Sigmoid colon (tissue), 7 donors: ENCODE measurements at regions of chr10 and their contacts with region 1.

Region 1: GRCh38 chr10:42552493-42553407 is 85.6 kb downstream of the ZNF33B start:
- DNase-seq: peak; percentile 97
- H3K4me3 ChIP-seq: peak overlapping the region; percentile 60 to 87 (median 77)
- H3K27ac ChIP-seq: peak overlapping the region; percentile 77 to 83 (median 80)
- H3K4me1 ChIP-seq: peaks cover 0 to 23% (median 21%) of the 10 kb centered on the region in 4 donors
- H3K27me3 ChIP-seq: no peaks in the 10 kb centered on the region
- CTCF ChIP-seq: no peak
- EP300 ChIP-seq: no peak
- POLR2A ChIP-seq: no peak

Region 2: DNA sequence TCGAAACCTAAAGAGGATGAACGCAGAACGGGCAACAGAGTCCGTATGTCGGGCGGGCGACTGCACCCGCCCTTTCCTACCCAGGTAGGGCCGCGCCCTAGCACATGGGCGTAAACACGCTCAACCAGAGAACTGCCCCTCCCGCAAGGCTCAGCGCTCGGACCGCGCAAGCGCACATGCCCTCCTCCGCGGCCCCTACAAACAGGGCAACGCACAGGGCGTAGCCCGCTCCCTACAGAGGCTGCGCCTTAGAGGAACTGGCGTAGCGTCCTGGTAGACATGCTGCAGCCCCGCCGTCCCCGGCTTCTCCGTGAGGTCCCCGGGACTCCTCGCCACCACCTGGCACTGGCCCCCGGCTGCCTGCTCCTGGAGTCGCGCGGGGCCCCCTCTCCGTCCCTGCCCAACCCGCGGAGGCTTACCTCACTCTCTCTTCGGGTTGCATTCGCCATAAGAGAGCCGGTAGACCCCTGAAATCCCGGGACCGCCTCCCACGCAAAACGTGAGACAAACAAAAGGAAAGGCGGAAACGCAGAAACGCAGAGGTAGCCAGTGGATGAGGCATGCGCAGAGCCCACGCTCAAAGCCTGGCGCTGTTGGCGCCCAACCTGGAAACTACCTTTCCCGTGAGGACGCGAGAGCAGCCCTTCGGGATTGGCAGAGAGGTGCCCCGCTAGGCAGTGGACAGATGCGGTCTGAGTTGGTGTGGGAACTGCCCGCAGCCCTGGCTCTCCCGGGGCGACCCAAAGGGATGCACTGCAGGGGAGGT is 85.5 kb after region 1 on chr10 and contains the start of gene ZNF33B:
- intact Hi-C with region 1: loop called (anchors 2 kb)
- DNase-seq: peak; percentile 95
- H3K4me3 ChIP-seq: peak within 1 kb of the TSS; percentile 62 to 82 (median 76)
- H3K27ac ChIP-seq: peak within 1 kb of the TSS; percentile 89 to 92 (median 90)
- H3K4me1 ChIP-seq: peaks cover 0 to 10% (median 3%) of the 10 kb centered on the region in 4 donors
- H3K27me3 ChIP-seq: no peaks in the 10 kb centered on the region
- CTCF ChIP-seq: no peak
- EP300 ChIP-seq: no peak
- POLR2A ChIP-seq: peak; percentile 36 to 54
- total RNA-seq, gene ZNF33B: 14.8 to 21.9 (median 17.4) TPM

Region 3: GRCh38 chr10:42782446-42783180 is 229.9 kb after region 1 on chr10 and contains the start of gene BMS1:
- intact Hi-C with region 1: loop called (anchors 10 kb)
- DNase-seq: peak; percentile 94
- H3K4me3 ChIP-seq: peak within 1 kb of the TSS; percentile 55 to 74 (median 64)
- H3K27ac ChIP-seq: peak within 1 kb of the TSS; percentile 88 to 96 (median 90)
- H3K4me1 ChIP-seq: peaks cover 0 to 18% (median 13%) of the 10 kb centered on the region in 4 donors
- H3K27me3 ChIP-seq: peaks cover 0 to under 1% (median 0%) of the 10 kb centered on the region in 3 donors
- CTCF ChIP-seq: no peak
- EP300 ChIP-seq: no peak
- POLR2A ChIP-seq: peak; percentile 45 to 61
- total RNA-seq, gene BMS1: 12.2 to 14.3 (median 13.3) TPM

Region 4: DNA sequence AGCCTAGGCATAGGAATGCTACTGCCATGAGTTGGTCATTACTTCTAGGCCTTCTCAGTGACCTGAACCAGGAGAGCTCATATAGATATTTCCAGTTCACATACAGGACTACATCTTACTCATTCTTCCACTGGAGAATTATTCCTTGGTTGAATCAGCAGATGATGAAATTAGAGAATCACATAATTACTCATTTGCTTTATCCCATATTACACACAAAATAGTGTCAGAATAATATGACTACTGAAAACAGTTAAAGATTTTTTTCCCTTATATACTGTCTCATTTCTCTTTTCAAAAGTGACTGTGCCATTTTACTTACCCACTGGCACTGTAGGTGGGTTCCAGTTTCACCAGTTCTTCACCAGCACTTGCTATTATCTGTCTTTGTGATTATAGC is 248.4 kb after region 1 on chr10:
- intact Hi-C with region 1: no loop called
- DNase-seq: no peak
- H3K4me3 ChIP-seq: no peak overlapping the region
- H3K27ac ChIP-seq: no peak overlapping the region
- H3K4me1 ChIP-seq: no peaks in the 10 kb centered on the region
- H3K27me3 ChIP-seq: no peaks in the 10 kb centered on the region
- CTCF ChIP-seq: no peak
- EP300 ChIP-seq: no peak
- POLR2A ChIP-seq: no peak